ENCODE measurements at regions of chr3 and their contacts with region 1.

Region 1: DNA sequence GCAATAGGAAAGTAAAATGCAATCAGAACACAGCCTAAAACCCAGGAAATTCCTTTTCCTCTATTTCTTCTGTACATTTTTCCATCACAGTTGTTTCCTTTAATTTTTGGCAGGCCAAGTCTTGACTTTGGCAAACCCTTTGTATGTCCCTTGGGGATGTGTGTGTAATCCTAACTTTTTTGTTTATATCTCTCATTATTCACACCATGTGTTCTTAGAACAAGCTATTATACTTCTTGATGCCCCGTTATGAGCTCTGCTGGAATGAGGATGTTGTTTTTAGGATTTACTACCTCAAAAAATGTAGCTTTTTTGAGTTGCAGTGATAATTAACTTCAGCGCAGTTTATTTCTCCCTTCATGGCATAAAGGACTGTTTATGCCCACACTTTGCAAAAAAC is 123.4 kb downstream of the ABI3BP start:
- DNase-seq: no peak
- ATAC-seq: no peak
- H3K4me3 ChIP-seq: no peak overlapping the region
- H3K27ac ChIP-seq: no peak overlapping the region
- H3K4me1 ChIP-seq: no peaks in the 10 kb centered on the region
- H3K27me3 ChIP-seq: peaks cover 2% of the 10 kb centered on the region; the same call in 1 of the 2 replicates
- CTCF ChIP-seq: no peak

Region 2: GRCh38 chr3:98884675-98885371 is 1985.0 kb before region 1 on chr3:
- CTCF ChIA-PET with region 1: no interaction called
- POLR2A ChIA-PET with region 1: interaction called, 13 read pairs
- in situ Hi-C with region 1: no loop called
- intact Hi-C with region 1: no loop called
- DNase-seq: no peak
- ATAC-seq: peak; percentile 75
- H3K4me3 ChIP-seq: no peak overlapping the region
- H3K27ac ChIP-seq: peak overlapping the region; percentile 69
- H3K4me1 ChIP-seq: peaks cover 31% of the 10 kb centered on the region
- H3K27me3 ChIP-seq: no peaks in the 10 kb centered on the region
- CTCF ChIP-seq: no peak

Region 3: DNA sequence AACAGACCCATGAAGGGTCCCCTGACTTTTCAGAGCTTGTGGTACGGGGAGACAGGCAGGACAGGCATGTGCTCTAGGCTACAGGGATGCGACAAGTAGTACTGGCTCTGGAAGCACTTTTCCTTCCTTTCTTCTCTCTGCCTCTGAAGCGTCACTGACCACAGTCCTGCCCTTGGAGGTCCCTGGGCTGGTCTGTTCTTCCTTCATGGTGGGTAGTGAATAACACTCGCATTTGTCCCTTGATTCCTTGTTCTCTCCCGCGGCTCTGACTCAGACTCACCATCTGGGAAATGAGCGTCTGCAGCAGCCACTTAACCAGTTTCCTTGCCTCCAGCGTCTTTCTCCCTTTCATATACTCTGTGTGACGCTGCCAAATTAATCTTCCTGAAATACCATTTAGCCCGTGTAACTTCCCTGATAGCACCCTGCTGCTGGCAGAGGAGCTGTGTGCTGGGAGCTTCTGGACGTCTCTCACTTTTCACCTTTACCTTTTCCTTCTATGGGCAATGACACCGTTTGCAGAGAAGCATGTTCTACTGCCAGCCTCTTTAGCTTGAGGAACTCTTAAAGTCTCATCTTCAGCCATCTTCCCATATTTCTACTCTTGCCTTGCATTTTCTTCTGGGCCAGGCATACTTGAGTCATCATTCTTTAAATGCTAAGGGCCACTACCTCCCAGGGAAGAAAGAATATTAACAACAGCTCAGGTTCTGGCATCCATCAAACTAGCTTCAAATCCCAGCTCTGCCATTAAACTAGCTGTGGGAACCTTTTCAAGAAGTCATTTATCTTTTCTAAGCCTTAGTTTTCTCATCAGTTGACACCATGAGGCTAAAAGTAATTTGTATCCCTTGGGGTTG is 343.8 kb before region 1 on chr3:
- CTCF ChIA-PET with region 1: no interaction called
- POLR2A ChIA-PET with region 1: no interaction called
- in situ Hi-C with region 1: no loop called
- intact Hi-C with region 1: no loop called
- DNase-seq: no peak
- ATAC-seq: peak; percentile 84
- H3K4me3 ChIP-seq: peak overlapping the region in 1 of 2 experiments; percentile 12; a peak in 1 of 4 replicates
- H3K27ac ChIP-seq: no peak overlapping the region
- H3K4me1 ChIP-seq: no peaks in the 10 kb centered on the region
- H3K27me3 ChIP-seq: no peaks in the 10 kb centered on the region
- CTCF ChIP-seq: no peak

Measured in Panc1 (cell line).